Left ventricle myocardium superior (tissue), 1 donor: ENCODE measurements at regions of chr12 and their contacts with region 1.

Region 1: DNA sequence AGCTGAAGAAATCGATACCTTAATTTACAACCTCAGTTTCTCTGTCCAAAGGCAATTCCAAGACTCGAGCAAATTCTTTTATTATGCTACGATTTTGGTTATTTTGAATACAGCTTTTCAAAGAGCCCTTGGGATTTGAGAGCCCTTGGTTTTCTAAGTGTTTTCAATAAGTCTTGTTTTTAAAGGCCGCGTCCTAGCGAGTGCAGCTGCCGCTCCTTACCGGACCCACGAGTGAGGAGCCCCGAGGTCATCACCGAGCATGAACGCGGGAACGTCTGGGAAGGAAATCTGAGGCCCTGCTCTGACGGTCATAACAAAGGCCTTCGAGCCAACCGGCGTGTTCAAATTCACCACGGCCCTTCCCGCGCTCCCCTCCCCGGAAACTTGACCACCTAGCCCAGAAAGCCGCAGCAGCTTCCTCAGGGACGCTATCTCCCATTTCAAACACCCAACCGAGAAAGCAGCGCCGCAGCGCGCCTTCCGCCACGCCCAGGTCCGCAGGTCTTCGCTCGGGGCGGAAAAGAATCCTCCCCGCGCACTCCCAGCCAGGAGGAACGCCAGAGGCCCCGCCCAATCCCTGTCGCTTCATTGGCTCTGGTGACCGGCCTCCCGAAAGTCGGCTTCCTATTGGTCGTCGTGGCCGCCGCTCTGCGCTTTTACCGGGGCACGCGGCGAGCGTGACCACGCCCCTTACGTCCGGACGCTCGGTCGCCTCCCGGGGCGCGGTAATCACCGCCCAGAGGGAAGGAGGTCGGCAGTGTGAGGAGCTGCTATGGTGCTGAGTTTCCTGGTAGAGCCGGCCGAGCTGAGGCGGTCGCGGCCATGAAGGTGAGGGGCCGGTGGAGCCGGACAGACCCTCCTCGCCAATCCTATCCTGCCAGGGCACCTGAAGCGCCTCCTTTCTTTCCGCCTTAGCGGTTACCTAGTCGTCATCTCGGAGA is at the start of gene RNF34:
- DNase-seq: peak; percentile 100
- ATAC-seq: peak; percentile 99
- total RNA-seq, gene RNF34: 19.9 TPM

Region 2: DNA sequence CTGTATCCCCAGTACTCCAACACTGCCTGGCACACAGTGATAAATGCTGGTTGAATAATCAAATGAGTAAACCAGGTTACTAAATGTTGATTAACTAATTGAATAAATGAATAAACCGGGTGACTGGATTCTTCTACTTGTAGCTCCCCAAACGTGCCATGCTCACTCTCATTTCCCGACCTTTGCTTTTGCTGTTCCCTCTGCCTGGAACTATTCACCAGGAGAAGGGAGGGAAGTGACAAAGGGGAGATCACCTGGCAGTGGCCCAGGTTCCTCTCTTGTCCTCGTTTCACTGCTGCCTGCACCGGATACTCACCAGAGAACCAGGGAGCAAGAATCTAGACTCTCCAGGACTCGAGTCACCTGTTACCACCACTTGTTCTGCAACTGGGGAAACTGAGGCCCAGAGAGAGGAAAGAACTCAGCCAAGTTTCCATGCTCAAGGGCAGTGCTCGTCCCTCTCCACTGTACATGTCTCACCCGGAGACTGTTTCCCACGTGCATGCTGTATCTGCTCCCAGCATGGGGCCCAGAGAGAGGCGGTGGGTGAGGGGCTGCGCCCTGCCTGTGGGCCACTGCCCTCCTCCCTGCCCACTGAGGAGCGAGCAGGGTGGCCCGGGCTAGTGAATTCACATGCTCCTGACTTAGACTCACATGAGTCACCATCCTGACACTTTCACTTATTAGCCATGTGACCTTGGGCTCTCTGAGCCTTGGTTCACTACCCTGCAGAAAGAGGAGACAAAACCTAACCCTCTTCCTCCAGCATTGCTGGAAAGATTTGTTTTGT is 800.8 kb before region 1 on chr12:
- intact Hi-C with region 1: no loop called
- DNase-seq: no peak
- ATAC-seq: peak; percentile 80

Region 3: GRCh38 chr12:121345151-121345815 is 54.4 kb before region 1 on chr12:
- intact Hi-C with region 1: loop called (anchors 10 kb)
- DNase-seq: no peak
- ATAC-seq: no peak

Region 4: DNA sequence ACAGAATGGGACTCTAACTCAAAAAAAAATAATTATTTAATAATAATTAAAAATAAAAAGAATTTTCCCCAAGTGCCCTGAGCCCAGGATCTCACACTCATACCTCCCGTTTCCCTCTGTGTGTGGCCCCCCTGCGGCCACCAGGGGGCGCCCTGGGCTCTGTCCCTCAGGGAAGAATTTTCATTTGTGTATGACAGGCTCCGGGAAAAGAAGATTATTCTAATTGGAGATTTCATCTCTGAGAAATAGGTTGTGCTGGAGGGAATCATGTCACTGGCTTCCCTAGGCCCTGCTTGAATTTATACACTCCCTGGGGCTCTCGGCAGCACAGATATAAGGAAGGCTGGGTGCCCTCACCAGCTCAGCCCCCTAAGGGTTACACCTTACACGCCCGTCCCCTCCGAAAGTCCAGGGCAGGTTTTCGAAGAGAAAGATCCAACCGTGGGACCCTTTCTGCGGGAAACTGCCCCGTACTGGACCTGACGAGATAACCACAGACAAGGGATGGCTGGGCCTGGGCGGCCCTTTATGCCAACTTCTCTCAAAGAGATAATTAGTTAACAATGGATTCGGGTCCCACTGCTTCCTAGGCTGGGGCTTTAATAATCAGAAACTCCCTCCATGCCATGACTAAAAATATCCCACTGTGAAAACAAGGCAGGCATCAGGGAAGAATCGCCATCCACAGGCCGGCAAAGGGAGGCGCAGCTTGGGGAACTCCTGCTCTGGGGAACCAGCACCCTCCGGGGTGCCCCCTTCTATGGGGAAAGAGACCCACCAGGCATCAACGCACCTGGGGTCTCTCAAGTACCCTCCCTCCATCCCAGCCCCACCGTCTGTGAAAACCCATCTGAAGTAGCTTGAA is 100.5 kb after region 1 on chr12:
- intact Hi-C with region 1: no loop called
- DNase-seq: peak; percentile 90
- ATAC-seq: peak; percentile 88